Activated CD4-positive, alpha-beta T cell treated with anti-CD3 and anti-CD28 coated beads, Interleukin-2, amount 10 ng/mL, durations not matched to agents 7 days and 5 days (primary cell): ENCODE measurements at regions of chr17 and their contacts with region 1.

Region 1: DNA sequence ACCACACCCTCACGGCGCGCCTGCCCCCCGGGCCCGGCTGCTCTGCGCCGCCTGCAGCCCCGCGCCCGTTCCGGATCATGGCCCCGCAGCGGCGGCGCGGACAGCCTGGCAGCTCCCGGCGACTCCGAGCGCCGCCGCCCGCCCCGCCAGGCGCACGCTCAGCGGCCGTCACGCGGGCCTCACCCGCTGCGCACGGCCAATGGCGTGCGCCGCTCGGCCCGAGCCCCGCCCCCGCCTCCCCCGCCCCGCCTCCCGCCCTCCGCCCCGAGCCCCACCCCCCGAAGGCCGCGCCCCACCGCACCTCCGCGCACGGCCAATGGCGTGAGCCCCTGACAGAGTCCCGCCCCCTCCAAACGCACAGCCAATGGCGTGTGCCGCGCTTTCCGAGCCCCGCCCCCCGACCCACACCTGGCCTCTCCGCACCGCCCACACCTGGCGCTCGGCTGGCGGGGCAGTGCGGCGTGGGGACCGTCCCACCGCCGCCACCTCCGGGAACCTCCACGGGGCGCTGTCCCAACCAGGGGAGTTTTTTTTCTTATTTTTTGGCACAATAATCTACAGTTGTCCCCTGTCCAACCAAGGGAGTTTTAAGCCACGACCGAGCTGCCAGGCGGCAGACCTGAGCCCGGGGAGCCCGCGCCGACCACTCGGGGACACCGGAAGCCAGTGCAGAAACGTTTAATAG is at the start of gene PCYT2:
- DNase-seq: peak; percentile 93
- H3K4me3 Mint-ChIP-seq: peak within 1 kb of the TSS; percentile 88
- H3K27ac Mint-ChIP-seq: peak within 1 kb of the TSS; percentile 81
- H3K4me1 Mint-ChIP-seq: peaks cover 23% of the 10 kb centered on the region
- H3K27me3 Mint-ChIP-seq: no peaks in the 10 kb centered on the region
- total RNA-seq, gene PCYT2: 37.6 to 39.0 TPM

Region 2: GRCh38 chr17:81927653-81928543 is 16.5 kb after region 1 on chr17 and contains the start of gene MAFG:
- CTCF ChIA-PET with region 1: interaction called, 15 read pairs
- POLR2A ChIA-PET with region 1: no interaction called
- DNase-seq: peak; percentile 89
- H3K4me3 Mint-ChIP-seq: peak within 1 kb of the TSS; percentile 92
- H3K27ac Mint-ChIP-seq: peak within 1 kb of the TSS; percentile 94
- H3K4me1 Mint-ChIP-seq: peaks cover 34% of the 10 kb centered on the region
- H3K27me3 Mint-ChIP-seq: peaks cover 7% of the 10 kb centered on the region
- total RNA-seq, gene MAFG: 15.8 to 20.2 TPM